Motor neuron (in vitro differentiated cells): ENCODE measurements at regions of chr7 and their contacts with region 1.

Region 1: GRCh38 chr7:91089382-91089963 is 174.8 kb upstream of the FZD1 start:
- ATAC-seq: peak in 7 of 8 experiments; percentile 44 to 68 (median 59)
- H3K4me3 ChIP-seq: peak overlapping the region in 3 of 5 donors; percentile 9 to 21 (median 16)
- H3K27ac ChIP-seq: no peak overlapping the region
- H3K4me1 ChIP-seq: no peaks in the 10 kb centered on the region

Region 2: DNA sequence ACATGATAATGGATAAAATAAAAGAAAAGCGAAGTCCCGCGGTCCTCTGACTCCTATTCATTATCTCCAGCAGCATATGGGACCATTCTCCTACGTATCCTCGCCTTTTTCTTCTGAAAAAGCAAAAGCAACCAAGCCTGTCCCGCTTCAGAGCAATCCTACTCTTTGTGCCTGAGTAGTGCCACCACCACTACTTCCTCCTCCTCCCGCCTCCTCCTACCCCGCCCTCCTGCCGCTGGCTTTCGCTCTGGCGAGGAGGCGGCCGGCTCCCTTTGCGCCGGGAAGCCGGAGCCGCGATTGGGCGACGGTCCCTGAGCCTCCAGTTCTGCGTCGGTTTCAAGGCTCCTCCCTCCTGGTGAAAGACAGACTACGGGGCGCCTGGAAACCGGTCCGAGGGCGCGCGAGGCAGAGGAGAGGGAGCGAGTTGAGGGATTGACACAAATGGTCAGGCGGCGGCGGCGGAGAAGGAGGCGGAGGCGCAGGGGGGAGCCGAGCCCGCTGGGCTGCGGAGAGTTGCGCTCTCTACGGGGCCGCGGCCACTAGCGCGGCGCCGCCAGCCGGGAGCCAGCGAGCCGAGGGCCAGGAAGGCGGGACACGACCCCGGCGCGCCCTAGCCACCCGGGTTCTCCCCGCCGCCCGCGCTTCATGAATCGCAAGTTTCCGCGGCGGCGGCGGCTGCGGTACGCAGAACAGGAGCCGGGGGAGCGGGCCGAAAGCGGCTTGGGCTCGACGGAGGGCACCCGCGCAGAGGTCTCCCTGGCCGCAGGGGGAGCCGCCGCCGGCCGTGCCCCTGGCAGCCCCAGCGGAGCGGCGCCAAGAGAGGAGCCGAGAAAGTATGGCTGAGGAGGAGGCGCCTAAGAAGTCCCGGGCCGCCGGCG is 174.8 kb after region 1 on chr7 and contains the start of gene FZD1:
- in situ Hi-C with region 1: loop called in 4 of 9 experiments (anchors 25 kb)
- ATAC-seq: peak; percentile 85 to 93 (median 91)
- H3K4me3 ChIP-seq: peak within 1 kb of the TSS; percentile 56 to 76 (median 63)
- H3K27ac ChIP-seq: peak within 1 kb of the TSS; percentile 12 to 61
- H3K4me1 ChIP-seq: peaks cover 0 to 7% of the 10 kb centered on the region in 2 donors
- total RNA-seq, gene FZD1: 2.1 to 10.9 (median 3.3) TPM

Region 3: GRCh38 chr7:91636129-91636724 is 546.8 kb after region 1 on chr7:
- in situ Hi-C with region 1: loop called in 3 of 9 experiments (anchors 10 to 25 kb)
- ATAC-seq: peak in 3 of 8 experiments; percentile 55 to 63 (median 59)
- H3K4me3 ChIP-seq: no peak overlapping the region
- H3K27ac ChIP-seq: no peak overlapping the region
- H3K4me1 ChIP-seq: peaks cover 8 to 17% of the 10 kb centered on the region in 2 donors

Region 4: GRCh38 chr7:91784463-91784862 is 695.0 kb after region 1 on chr7:
- in situ Hi-C with region 1: loop called in 4 of 9 experiments (anchors 25 kb)
- ATAC-seq: peak in 3 of 8 experiments; percentile 69 to 84 (median 83)
- H3K4me3 ChIP-seq: no peak overlapping the region
- H3K27ac ChIP-seq: no peak overlapping the region
- H3K4me1 ChIP-seq: no peaks in the 10 kb centered on the region

Region 5: GRCh38 chr7:91880413-91881241 is 791.2 kb after region 1 on chr7 and contains the start of gene MTERF1:
- in situ Hi-C with region 1: loop called in 1 of 9 experiments (anchors 25 kb)
- ATAC-seq: peak; percentile 95 to 99 (median 98)
- H3K4me3 ChIP-seq: peak within 1 kb of the TSS; percentile 56 to 75 (median 67)
- H3K27ac ChIP-seq: no peak within 1 kb of the TSS
- H3K4me1 ChIP-seq: peaks cover 0 to 7% of the 10 kb centered on the region in 2 donors
- total RNA-seq, gene MTERF1: 12.3 to 22.3 (median 15.8) TPM